Activated CD8-positive, alpha-beta memory T cell treated with anti-CD3 and anti-CD28 coated beads, Interleukin-2, amount 10 ng/mL, durations not matched to agents 7 days and 5 days (primary cell): ENCODE measurements at regions of chr11 and their contacts with region 1.

Region 1: GRCh38 chr11:117107701-117108590 is 9.7 kb upstream of the SIK3 start:
- DNase-seq: no peak
- ATAC-seq: no peak
- H3K4me3 Mint-ChIP-seq: no peak overlapping the region
- H3K27ac Mint-ChIP-seq: no peak overlapping the region
- H3K4me1 Mint-ChIP-seq: peaks cover 6% of the 10 kb centered on the region
- H3K27me3 Mint-ChIP-seq: peaks cover 3% of the 10 kb centered on the region

Region 2: DNA sequence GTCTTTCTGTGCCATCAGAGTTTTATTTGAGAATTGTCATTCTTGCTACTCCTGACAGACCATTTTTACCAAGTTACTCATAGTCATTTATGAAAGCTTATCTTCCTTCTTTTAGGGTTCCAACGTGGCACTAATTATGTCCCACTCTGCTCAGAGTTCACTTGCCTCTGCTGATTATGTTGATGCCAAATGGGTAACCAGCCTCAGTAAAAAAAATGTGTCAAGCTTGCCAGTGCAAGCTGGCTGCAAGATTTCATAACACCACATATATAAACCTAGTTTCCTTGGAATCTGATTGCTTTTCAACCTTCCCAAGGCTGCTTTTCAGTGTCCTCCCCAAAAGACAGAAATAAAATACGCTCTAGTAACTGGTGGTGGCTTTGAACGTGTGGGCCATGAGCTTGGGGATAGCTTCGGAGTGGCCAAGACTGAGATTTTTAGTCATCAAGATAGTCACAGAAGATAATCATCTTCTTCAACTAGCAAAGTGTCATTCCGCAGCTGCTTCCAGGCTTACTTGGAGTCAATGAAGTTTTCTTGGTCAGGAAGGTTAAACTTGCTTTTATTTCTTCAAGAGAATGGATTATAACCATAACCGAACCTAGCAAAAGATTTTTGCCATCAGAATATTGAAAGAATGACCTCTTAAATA is 241.0 kb before region 1 on chr11:
- CTCF ChIA-PET with region 1: interaction called, 10 read pairs
- DNase-seq: no peak
- ATAC-seq: no peak
- H3K4me3 Mint-ChIP-seq: no peak overlapping the region
- H3K27ac Mint-ChIP-seq: no peak overlapping the region
- H3K4me1 Mint-ChIP-seq: peaks cover 23% of the 10 kb centered on the region
- H3K27me3 Mint-ChIP-seq: no peaks in the 10 kb centered on the region

Region 3: GRCh38 chr11:116927163-116927974 is 180.6 kb before region 1 on chr11:
- CTCF ChIA-PET with region 1: interaction called, 10 read pairs
- DNase-seq: peak; percentile 65
- ATAC-seq: no peak
- H3K4me3 Mint-ChIP-seq: peak overlapping the region; percentile 39
- H3K27ac Mint-ChIP-seq: peak overlapping the region; percentile 80
- H3K4me1 Mint-ChIP-seq: peaks cover 70% of the 10 kb centered on the region
- H3K27me3 Mint-ChIP-seq: no peaks in the 10 kb centered on the region

Region 4: DNA sequence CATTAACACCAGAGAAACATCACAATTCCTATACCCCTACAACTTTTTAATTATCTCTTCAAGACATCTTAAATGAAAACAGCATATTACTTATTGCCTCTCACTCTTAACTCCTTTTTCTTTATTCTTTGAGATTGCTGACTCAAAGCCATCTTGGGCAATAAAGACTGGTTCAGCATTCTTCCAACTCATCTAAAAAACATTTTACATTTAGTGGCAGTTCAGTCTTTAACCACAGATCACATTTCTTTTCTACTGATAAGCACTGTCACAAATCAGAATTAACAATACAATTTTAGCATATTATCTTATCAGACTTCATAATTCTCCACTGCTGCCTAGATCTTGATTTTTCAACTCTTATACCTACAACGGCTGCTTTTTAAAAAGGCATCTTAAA is 43.7 kb before region 1 on chr11:
- CTCF ChIA-PET with region 1: no interaction called
- DNase-seq: no peak
- ATAC-seq: no peak
- H3K4me3 Mint-ChIP-seq: no peak overlapping the region
- H3K27ac Mint-ChIP-seq: peak overlapping the region; percentile 35
- H3K4me1 Mint-ChIP-seq: peaks cover 50% of the 10 kb centered on the region
- H3K27me3 Mint-ChIP-seq: no peaks in the 10 kb centered on the region

Region 5: GRCh38 chr11:117143871-117144476 is 36.0 kb after region 1 on chr11 and contains the start of gene PAFAH1B2:
- CTCF ChIA-PET with region 1: interaction called, 12 read pairs
- DNase-seq: peak; percentile 97
- ATAC-seq: peak; percentile 94
- H3K4me3 Mint-ChIP-seq: peak within 1 kb of the TSS; percentile 100
- H3K27ac Mint-ChIP-seq: peak within 1 kb of the TSS; percentile 88
- H3K4me1 Mint-ChIP-seq: peaks cover 39% of the 10 kb centered on the region
- H3K27me3 Mint-ChIP-seq: peaks cover 24% of the 10 kb centered on the region
- total RNA-seq, gene PAFAH1B2: 54.5 to 66.4 TPM

Region 6: DNA sequence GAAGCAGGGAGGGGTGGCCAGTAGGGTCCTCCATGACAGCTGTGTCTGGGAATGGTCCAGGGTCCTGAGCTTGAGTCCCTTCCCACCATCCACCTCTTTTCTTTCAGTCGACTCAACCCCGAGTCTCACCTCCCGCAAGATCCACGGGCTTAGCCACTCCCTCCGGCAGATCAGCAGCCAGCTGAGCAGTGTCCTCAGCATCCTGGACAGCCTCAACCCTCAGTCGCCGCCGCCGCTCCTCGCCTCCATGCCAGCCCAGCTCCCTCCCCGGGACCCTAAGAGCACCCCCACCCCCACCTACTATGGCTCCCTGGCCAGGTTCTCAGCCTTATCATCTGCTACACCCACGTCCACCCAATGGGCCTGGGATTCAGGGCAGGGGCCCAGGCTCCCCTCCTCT is 301.6 kb after region 1 on chr11:
- CTCF ChIA-PET with region 1: no interaction called
- DNase-seq: no peak
- ATAC-seq: no peak
- H3K4me3 Mint-ChIP-seq: no peak overlapping the region
- H3K27ac Mint-ChIP-seq: no peak overlapping the region
- H3K4me1 Mint-ChIP-seq: no peaks in the 10 kb centered on the region
- H3K27me3 Mint-ChIP-seq: no peaks in the 10 kb centered on the region